ENCODE measurements at regions of chr12 and their contacts with region 1.

Region 1: GRCh38 chr12:46546634-46547286 is 174.2 kb upstream of the SLC38A2 start:
- DNase-seq: peak; percentile 45
- H3K4me3 Mint-ChIP-seq: no peak overlapping the region
- H3K27ac Mint-ChIP-seq: peak overlapping the region; percentile 74
- H3K4me1 Mint-ChIP-seq: peaks cover 58% of the 10 kb centered on the region
- H3K27me3 Mint-ChIP-seq: no peaks in the 10 kb centered on the region

Region 2: GRCh38 chr12:46209914-46210872 is 336.6 kb before region 1 on chr12:
- CTCF ChIA-PET with region 1: no interaction called
- intact Hi-C with region 1: loop called (anchors 2 kb)
- DNase-seq: peak; percentile 87
- H3K4me3 Mint-ChIP-seq: peak overlapping the region; percentile 60
- H3K27ac Mint-ChIP-seq: peak overlapping the region; percentile 99
- H3K4me1 Mint-ChIP-seq: peaks cover 84% of the 10 kb centered on the region
- H3K27me3 Mint-ChIP-seq: no peaks in the 10 kb centered on the region

Region 3: GRCh38 chr12:46382964-46383653 is 163.7 kb before region 1 on chr12:
- CTCF ChIA-PET with region 1: no interaction called
- intact Hi-C with region 1: loop called (anchors 1 kb)
- DNase-seq: peak; percentile 96
- H3K4me3 Mint-ChIP-seq: peak overlapping the region; percentile 77
- H3K27ac Mint-ChIP-seq: peak overlapping the region; percentile 87
- H3K4me1 Mint-ChIP-seq: peaks cover 38% of the 10 kb centered on the region
- H3K27me3 Mint-ChIP-seq: no peaks in the 10 kb centered on the region

Region 4: DNA sequence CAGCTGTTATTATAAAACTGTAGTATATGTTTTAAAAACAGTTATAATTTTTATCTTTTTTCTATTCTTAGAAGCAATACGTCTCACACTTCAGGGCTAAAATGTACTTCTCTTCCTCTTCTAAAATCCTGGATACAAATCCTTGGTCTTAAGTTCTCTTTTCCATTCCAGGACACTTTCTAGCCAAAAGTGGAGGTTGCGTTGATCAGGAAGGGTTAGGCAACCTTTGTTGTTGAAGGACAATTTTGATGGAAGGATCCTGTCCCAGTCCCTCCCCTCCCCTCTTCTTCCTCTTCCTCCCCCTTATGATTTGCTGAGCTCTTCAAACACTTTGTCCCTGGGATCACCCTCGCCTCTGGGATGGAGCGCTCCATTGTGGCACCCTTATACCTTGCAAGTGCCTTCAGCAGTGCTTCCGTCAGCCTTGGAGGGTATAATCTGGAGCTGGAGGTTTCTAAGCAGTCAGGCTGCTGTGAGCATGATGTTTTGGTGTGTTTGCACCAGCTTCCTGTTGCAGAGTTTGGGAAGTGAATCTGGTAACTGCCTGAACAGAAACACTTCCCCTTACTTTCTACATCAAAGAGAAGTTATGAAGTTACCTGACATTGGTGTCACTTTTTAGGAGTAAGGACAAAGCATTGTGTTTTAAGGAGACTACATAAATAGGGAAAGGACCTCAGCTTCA is 86.8 kb before region 1 on chr12:
- CTCF ChIA-PET with region 1: no interaction called
- intact Hi-C with region 1: loop called (anchors 1 kb)
- DNase-seq: peak; percentile 48
- H3K4me3 Mint-ChIP-seq: peak overlapping the region; percentile 71
- H3K27ac Mint-ChIP-seq: peak overlapping the region; percentile 91
- H3K4me1 Mint-ChIP-seq: peaks cover 64% of the 10 kb centered on the region
- H3K27me3 Mint-ChIP-seq: no peaks in the 10 kb centered on the region

Region 5: DNA sequence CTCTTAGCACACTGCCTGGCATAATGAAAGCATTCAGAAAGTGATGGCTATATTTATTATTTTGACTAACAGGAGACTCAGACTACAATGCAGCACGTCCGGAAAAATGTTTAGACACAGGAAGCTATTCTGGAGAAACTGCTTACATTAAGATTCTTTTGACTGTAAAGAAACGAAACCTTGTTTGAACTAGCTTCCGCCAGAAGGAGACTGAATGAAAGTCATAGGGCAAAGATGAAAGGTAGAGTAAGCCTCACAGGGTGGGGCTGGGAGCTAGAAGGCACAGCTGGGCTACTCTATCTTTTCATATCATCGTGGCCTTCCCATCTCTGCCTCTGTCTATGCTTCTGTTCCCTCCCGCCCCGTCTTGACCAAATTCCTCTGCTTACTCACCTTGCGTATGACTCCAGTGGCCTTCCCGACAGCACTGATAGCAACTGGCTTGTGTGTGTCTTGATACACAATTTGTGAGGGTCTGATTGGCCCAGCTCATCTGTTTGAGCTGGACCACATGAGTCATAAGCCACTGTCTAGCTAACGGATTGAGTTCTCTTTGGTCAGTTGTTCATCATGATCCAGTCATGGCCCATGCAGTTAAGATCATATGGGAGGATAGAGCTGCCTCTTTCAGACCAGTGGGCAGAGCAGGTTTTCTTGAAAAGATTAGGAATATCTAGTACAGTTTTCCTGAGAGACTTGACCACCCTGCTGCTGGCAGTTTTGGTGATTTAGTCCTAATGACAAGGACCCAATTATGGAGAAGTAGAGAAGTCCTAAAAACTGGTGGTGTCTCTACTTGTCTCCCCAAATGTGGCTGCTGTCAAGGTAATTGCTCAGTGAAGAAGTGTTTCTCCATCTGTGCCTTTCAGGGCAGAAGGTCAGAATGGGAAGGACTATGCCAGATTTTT is 22.6 kb before region 1 on chr12:
- CTCF ChIA-PET with region 1: interaction called, 5 read pairs
- intact Hi-C with region 1: loop called (anchors 1 kb)
- DNase-seq: peak; percentile 76
- H3K4me3 Mint-ChIP-seq: peak overlapping the region; percentile 61
- H3K27ac Mint-ChIP-seq: peak overlapping the region; percentile 81
- H3K4me1 Mint-ChIP-seq: peaks cover 38% of the 10 kb centered on the region
- H3K27me3 Mint-ChIP-seq: no peaks in the 10 kb centered on the region

Region 6: DNA sequence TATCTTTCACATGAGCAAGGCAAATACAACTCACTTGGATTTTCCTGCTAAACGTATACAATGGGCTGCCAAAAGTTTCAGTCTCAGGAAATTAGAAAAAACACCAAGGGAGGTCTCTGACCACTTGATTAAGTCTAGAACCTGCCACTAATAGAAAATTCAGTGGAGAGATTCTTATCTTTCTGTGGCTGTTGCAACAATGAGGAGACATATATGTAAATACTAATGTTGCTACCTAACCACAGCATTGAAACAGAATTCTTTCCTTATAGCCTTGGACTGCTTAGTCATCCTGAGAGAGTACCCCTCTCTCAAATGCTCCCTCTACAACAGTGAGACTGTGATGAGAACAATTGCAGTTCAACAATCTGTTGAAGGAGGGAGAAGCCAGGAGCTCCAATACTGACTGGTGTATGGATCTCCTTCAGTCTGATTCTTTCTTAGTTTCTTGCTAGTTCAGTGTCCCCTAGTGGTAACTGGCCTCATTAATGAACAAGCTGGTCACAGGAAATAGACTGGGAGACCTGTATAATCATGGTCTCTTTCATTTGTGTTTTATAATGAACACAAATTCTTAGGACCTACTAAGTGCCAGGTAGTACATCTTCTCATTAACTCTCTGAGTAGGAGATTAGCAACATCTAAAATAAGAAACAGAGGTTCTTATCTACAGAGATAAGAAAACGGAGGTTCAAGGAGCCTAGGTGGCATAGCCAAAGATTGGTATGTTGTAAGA is 114.5 kb after region 1 on chr12:
- CTCF ChIA-PET with region 1: interaction called, 3 read pairs
- intact Hi-C with region 1: loop called (anchors 2 kb)
- DNase-seq: peak; percentile 25
- H3K4me3 Mint-ChIP-seq: no peak overlapping the region
- H3K27ac Mint-ChIP-seq: no peak overlapping the region
- H3K4me1 Mint-ChIP-seq: peaks cover 29% of the 10 kb centered on the region
- H3K27me3 Mint-ChIP-seq: no peaks in the 10 kb centered on the region

Region 7: DNA sequence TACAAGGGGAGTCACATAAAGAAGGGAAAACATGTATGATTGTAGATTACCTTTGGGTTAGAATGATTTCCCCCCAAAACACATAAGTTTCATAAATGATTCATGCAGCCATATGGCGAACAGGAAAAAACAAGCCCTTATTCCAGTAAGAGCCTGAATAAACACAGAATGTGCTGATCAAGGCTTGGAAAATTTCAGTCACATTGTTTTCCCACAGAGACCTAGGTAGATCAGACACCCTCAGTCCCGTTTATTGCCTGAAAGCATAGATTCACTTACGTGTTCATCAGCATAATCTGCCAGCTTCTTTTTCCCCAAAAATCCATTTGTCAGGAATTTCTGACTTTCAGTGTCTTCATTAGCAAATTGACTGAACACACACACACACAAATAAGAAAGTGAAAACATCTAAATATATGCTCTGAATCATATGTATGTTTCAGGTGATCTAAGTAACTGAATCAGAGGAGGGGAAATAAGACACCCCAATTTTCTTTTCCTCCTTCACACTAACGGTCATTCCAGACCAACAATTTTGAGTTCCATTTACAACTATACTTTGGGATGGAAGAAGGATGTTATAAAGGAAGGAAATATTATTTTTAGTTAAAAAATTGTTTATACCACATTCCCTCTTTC is 241.6 kb after region 1 on chr12:
- CTCF ChIA-PET with region 1: no interaction called
- intact Hi-C with region 1: no loop called
- DNase-seq: no peak
- H3K4me3 Mint-ChIP-seq: no peak overlapping the region
- H3K27ac Mint-ChIP-seq: peak overlapping the region; percentile 33
- H3K4me1 Mint-ChIP-seq: peaks cover 19% of the 10 kb centered on the region
- H3K27me3 Mint-ChIP-seq: no peaks in the 10 kb centered on the region

Region 8: GRCh38 chr12:47356129-47356700 is 809.5 kb after region 1 on chr12:
- CTCF ChIA-PET with region 1: no interaction called
- intact Hi-C with region 1: loop called (anchors 1 kb)
- DNase-seq: peak; percentile 72
- H3K4me3 Mint-ChIP-seq: peak overlapping the region; percentile 64
- H3K27ac Mint-ChIP-seq: peak overlapping the region; percentile 100
- H3K4me1 Mint-ChIP-seq: peaks cover 82% of the 10 kb centered on the region
- H3K27me3 Mint-ChIP-seq: no peaks in the 10 kb centered on the region

Measured in activated naive CD4-positive, alpha-beta T cell treated with anti-CD3 and anti-CD28 coated beads for 36 hours (primary cell).